ENCODE measurements at regions of chrX and their contacts with region 1.

Region 1: DNA sequence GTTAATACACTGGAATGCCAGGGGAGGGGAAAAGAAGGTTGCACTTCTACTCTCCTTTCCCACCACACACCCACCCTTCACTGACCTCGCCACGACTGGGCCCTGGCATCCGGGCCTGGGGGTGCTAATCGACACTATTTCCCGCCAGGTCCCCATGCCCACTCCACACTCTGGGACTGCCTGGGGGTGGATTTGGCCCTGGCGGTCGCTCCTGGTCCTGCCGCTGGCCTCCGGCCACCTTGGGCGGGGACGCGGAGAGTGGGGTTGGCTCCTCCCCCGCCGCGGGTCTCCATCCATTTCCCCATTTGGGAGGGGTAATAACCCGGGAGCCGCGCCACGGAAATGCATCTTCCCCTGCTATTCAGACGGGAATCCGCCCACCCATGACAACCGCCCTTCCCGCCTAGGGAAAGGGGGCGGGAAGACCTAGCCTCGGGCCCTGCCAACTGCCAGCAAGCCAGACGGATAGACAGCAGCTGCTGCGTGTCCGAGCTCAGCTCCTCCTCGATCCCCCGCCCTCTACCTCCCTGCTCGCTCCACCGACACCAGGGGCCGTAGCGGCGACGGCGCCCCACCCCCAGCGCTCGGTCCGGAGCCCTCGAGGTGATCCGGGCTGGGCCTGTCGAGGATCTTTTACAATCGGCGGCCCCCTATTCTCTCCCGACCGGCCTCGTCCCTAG is 78.1 kb downstream of the RLIM start:
- DNase-seq: peak; percentile 53 to 77
- ATAC-seq: peak; percentile 75 to 78
- H3K4me3 ChIP-seq: peak overlapping the region; percentile 62 to 69 (median 62)
- H3K27ac ChIP-seq: peak overlapping the region; percentile 89 to 93 (median 90)
- H3K4me1 ChIP-seq: peaks cover 6% of the 10 kb centered on the region in 2 donors
- H3K27me3 ChIP-seq: no peaks in the 10 kb centered on the region
- CTCF ChIP-seq: peak; percentile 18 to 60 (median 54)
- POLR2A ChIP-seq: no peak

Region 2: DNA sequence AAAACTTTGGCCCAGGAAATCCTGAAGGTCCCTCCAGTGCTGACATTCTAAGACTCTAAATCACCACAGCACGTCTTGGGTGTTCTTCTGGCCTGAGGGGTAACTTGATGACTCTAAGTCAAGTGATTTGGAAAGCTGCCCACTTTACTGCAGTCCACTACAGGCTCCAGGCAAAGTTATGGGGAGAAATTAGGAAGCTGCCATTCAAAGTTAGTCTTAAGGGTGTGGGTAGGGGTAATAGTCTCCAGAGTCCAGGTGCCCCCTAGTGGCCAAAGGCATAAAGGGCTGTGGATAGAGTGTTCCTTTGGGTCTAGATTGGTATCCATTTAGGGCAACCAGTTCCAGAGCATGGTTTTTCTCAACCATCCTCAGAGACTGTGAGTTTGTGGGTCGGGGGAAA is 153.7 kb before region 1 on chrX:
- in situ Hi-C with region 1: loop called in 3 of 4 experiments (anchors 10 to 25 kb)
- intact Hi-C with region 1: loop called (anchors 5 kb)
- DNase-seq: peak; percentile 2 to 45
- ATAC-seq: peak; percentile 72 to 73
- H3K4me3 ChIP-seq: no peak overlapping the region
- H3K27ac ChIP-seq: no peak overlapping the region
- H3K4me1 ChIP-seq: no peaks in the 10 kb centered on the region
- H3K27me3 ChIP-seq: no peaks in the 10 kb centered on the region
- CTCF ChIP-seq: peak; percentile 27 to 74 (median 61)
- POLR2A ChIP-seq: no peak

Region 3: GRCh38 chrX:74421036-74421739 is 115.1 kb before region 1 on chrX and contains the start of gene SLC16A2:
- in situ Hi-C with region 1: no loop called
- intact Hi-C with region 1: loop called (anchors 1 kb)
- DNase-seq: peak; percentile 41 to 53
- ATAC-seq: peak; percentile 70 to 76
- H3K4me3 ChIP-seq: peak within 1 kb of the TSS; percentile 55 to 61 (median 58)
- H3K27ac ChIP-seq: peak within 1 kb of the TSS; percentile 76 to 83 (median 80)
- H3K4me1 ChIP-seq: peaks cover 3 to 8% of the 10 kb centered on the region in 2 donors
- H3K27me3 ChIP-seq: peaks cover 0 to 2% (median 0%) of the 10 kb centered on the region in 3 donors
- CTCF ChIP-seq: no peak
- POLR2A ChIP-seq: no peak
- total RNA-seq, gene SLC16A2: 1.3 to 2.4 (median 2.1) TPM

Region 4: DNA sequence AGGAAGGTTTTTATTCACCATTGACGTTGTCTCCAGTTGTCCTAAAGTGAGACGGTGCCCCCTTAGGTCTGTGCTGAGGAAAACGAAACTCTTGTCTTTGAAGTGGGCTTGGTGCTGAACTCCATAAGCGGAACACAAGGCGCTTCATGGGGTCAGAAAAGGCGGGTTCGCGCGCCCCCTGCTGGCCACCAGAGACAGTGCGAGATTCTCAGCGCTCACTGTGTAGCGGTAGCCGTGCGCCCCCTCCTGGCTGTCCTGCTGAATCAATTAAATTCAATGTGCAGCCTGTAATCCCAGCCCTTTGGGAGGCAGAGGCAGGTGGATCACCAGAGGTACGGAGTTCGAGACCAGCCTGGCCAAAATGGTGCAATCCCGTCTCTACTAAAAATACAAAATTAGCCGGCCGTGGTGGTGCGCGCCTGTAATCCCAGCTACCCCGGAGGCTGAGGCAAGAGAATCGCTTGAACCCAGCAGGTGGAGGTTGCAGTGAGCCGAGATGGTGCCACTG is 14.1 kb after region 1 on chrX:
- in situ Hi-C with region 1: no loop called
- intact Hi-C with region 1: loop called (anchors 1 kb)
- DNase-seq: peak; percentile 38 to 67
- ATAC-seq: peak; percentile 60 to 96
- H3K4me3 ChIP-seq: peak overlapping the region in 1 of 4 donors; percentile 25
- H3K27ac ChIP-seq: peak overlapping the region in 2 of 4 donors; percentile 46 to 56
- H3K4me1 ChIP-seq: no peaks in the 10 kb centered on the region
- H3K27me3 ChIP-seq: no peaks in the 10 kb centered on the region
- CTCF ChIP-seq: peak; percentile 87 to 97 (median 94)
- POLR2A ChIP-seq: no peak

Region 5: DNA sequence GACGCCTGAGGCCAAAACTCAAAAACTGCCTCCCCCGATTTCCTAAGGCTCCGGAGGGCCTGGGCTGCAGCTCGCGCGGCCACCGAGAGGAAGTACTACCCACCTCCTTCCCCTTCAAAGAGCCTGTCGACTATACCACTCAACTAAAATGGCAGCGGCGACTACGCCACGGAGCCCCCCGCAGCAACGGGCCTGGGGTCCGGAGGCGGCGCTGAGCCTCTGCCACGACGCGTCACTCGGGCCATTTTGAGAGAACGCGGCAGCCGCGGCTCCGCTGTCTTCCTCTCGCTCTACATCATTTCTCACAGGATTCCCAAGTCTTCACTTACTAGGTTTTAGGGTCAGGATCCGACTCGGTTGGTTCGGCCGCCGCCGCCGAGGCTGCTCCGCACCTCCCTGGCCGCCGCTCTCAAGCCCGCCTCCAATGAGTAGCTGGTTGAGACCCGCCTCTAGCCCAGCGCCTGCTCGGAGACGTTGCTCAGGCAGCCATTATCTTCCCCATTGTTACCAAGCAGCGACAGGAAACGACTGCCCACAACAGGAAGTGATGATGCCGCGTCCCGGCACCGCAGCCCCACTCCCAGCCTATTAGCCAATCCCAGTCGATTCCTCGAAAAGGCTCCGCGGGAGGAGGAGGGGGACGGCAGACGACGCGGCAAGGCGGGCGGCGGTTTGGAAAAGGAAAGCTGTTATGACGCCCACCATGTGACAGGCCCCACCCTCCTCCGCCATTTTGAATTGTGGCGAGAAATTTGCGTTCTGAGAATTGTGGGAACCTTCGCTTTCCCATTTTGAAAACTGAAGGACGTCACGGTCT is 78.0 kb after region 1 on chrX and contains the start of gene RLIM:
- in situ Hi-C with region 1: no loop called
- intact Hi-C with region 1: loop called (anchors 1 kb)
- DNase-seq: peak; percentile 90 to 94
- ATAC-seq: peak; percentile 95 to 96
- H3K4me3 ChIP-seq: peak within 1 kb of the TSS; percentile 59 to 86 (median 70)
- H3K27ac ChIP-seq: peak within 1 kb of the TSS; percentile 90 to 95 (median 93)
- H3K4me1 ChIP-seq: no peaks in the 10 kb centered on the region
- H3K27me3 ChIP-seq: peaks cover 0 to 3% (median 0%) of the 10 kb centered on the region in 3 donors
- CTCF ChIP-seq: no peak
- POLR2A ChIP-seq: peak; percentile 79 to 83
- total RNA-seq, gene RLIM: 15.3 to 26.7 (median 21.5) TPM